AG04449 (cell line): ENCODE measurements at regions of chr1 and their contacts with region 1.

Region 1: DNA sequence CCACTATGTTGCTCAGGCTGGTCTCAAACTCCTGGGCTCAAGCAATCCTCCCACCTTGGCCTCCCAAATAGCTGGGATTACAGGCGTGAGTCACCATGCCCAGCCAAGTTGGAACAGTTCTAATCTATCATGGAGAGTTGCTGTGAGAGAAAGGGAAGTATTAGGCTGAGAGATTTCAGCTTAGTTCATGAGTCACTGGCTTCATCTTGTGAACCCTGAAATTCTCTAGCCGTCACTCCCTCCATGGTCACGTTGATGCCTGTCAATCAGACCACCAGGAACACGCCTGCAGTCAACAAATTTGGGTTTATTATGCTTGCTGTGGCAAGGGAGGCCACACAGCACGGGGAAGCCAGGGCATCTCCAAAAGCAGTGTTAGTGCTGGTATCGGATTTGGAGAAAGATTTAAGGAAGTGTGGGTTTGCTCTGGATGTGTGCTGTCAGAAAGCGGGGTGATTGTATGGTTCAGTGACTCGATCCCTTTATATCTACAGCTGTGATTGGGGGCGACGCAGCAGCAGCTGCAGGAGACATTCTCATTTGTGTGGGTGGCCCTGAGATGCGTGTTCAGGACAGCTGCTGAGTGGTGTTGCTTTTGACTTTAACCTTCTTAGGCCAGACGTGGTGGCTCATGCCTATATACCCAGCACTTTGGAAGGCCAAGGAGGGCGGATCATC is 18.7 kb downstream of the UQCRHL start:
- DNase-seq: no peak
- H3K4me3 ChIP-seq: no peak overlapping the region
- CTCF ChIP-seq: no peak

Region 2: GRCh38 chr1:15777909-15778707 is 10.7 kb before region 1 on chr1:
- CTCF ChIA-PET with region 1: interaction called, 24 read pairs
- POLR2A ChIA-PET with region 1: no interaction called
- DNase-seq: no peak
- H3K4me3 ChIP-seq: no peak overlapping the region
- CTCF ChIP-seq: no peak

Region 3: DNA sequence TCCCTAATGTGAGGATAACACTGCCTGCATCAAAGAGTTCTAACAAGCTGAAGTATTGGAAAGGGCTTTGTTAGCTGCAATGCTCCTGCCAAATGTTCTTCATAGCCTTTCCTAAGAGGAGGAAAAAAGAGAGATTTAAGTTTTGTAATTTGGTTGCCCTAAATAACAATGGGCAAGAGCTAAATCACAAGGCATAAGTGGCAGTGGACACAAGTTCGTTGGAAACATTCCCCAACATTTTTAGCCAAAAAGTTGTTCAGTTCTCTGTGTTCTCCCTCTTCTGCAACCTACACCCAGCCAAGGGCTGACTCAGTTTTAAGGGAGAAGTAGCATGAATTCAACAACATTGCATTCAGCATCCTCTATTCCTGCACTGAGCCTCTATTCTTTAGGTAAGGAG is 21.3 kb after region 1 on chr1:
- CTCF ChIA-PET with region 1: interaction called, 21 read pairs
- POLR2A ChIA-PET with region 1: no interaction called
- DNase-seq: no peak
- H3K4me3 ChIP-seq: no peak overlapping the region
- CTCF ChIP-seq: no peak

Region 4: GRCh38 chr1:15957228-15958095 is 168.7 kb after region 1 on chr1:
- CTCF ChIA-PET with region 1: interaction called, 12 read pairs
- POLR2A ChIA-PET with region 1: no interaction called
- DNase-seq: no peak
- H3K4me3 ChIP-seq: no peak overlapping the region
- CTCF ChIP-seq: peak; percentile 51

Region 5: GRCh38 chr1:15985611-15986297 is 197.0 kb after region 1 on chr1:
- CTCF ChIA-PET with region 1: interaction called, 14 read pairs
- POLR2A ChIA-PET with region 1: no interaction called
- DNase-seq: no peak
- H3K4me3 ChIP-seq: no peak overlapping the region
- CTCF ChIP-seq: no peak

Region 6: GRCh38 chr1:16009030-16009709 is 220.4 kb after region 1 on chr1:
- CTCF ChIA-PET with region 1: interaction called, 10 read pairs
- POLR2A ChIA-PET with region 1: no interaction called
- DNase-seq: no peak
- H3K4me3 ChIP-seq: no peak overlapping the region
- CTCF ChIP-seq: peak; percentile 92

Region 7: GRCh38 chr1:16055613-16056520 is 267.1 kb after region 1 on chr1:
- CTCF ChIA-PET with region 1: interaction called, 19 read pairs
- POLR2A ChIA-PET with region 1: no interaction called
- DNase-seq: no peak
- H3K4me3 ChIP-seq: no peak overlapping the region
- CTCF ChIP-seq: peak; percentile 94